ENCODE measurements at regions of chr2 and their contacts with region 1.

Region 1: DNA sequence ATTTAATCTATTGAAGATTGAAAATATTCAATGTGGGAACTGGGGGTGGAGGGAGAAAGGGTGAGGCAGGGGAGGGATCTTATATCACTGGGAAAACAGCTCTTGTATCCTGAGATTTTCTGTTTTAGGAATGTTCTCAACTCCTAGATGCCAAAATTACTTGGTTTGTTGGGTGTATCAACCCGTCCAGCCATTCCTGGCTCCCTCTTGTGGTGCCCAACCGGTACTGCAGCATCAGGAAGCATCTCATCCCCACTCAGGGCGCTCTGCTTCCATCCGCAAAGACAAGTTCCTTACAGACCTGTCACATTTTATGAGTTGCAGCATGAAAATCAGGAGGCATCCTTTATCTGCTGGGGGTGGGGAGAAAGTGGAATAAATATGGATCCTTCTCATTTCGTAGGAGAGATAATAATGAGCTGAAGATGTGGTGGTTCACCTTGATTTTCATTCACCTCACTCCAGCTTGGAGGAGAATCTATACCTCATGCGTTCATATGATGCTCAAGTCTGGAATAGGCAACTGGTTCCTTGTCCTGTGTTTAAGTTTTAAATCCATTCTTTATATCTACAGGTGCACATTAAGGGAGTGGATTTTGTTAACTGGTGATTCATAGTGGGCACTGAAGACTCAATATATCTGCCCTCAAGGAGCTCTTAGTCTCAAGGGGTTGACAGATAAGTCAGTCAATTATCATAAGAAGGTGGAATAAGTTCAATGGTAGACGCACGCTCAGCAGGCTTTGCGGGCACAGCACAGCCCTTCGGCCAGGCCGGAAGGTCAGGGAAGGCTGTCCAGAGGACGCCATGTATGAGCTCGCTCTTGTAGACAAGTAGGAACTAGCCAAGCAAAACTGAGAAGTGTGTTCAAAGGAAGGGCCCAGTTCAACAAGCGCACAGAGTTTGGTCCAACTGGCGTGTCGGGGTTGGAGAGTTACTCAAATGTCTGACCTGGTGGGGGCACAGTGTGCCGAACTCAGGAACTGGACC is 127.3 kb downstream of the RNF144A start:
- DNase-seq: peak; percentile 57 to 77
- ATAC-seq: peak; percentile 86 to 95
- H3K4me3 ChIP-seq: no peak overlapping the region
- H3K27ac ChIP-seq: no peak overlapping the region
- H3K4me1 ChIP-seq: no peaks in the 10 kb centered on the region
- CTCF ChIP-seq: peak; percentile 88
- EP300 ChIP-seq: no peak
- POLR2A ChIP-seq: no peak
- RAD21 ChIP-seq: peak; percentile 64 to 70

Region 2: GRCh38 chr2:6392966-6393365 is 651.6 kb before region 1 on chr2:
- CTCF ChIA-PET with region 1: no interaction called
- POLR2A ChIA-PET with region 1: no interaction called
- DNase-seq: no peak
- ATAC-seq: no peak
- H3K4me3 ChIP-seq: no peak overlapping the region
- H3K27ac ChIP-seq: no peak overlapping the region
- H3K4me1 ChIP-seq: no peaks in the 10 kb centered on the region
- CTCF ChIP-seq: no peak
- EP300 ChIP-seq: no peak
- POLR2A ChIP-seq: no peak
- RAD21 ChIP-seq: no peak

Region 3: GRCh38 chr2:6845312-6845711 is 199.2 kb before region 1 on chr2:
- CTCF ChIA-PET with region 1: interaction called, 15 read pairs
- POLR2A ChIA-PET with region 1: no interaction called
- DNase-seq: peak in 1 of 2 experiments; percentile 35
- ATAC-seq: no peak
- H3K4me3 ChIP-seq: no peak overlapping the region
- H3K27ac ChIP-seq: no peak overlapping the region
- H3K4me1 ChIP-seq: no peaks in the 10 kb centered on the region
- CTCF ChIP-seq: no peak
- EP300 ChIP-seq: no peak
- POLR2A ChIP-seq: no peak
- RAD21 ChIP-seq: no peak

Region 4: GRCh38 chr2:6896930-6897759 is 147.4 kb before region 1 on chr2:
- CTCF ChIA-PET with region 1: interaction called, 44 read pairs
- POLR2A ChIA-PET with region 1: no interaction called
- DNase-seq: peak in 1 of 2 experiments; percentile 55
- ATAC-seq: peak in 1 of 2 experiments; percentile 68; a peak in 4 of 6 replicates
- H3K4me3 ChIP-seq: no peak overlapping the region
- H3K27ac ChIP-seq: no peak overlapping the region
- H3K4me1 ChIP-seq: no peaks in the 10 kb centered on the region
- CTCF ChIP-seq: peak; percentile 73
- EP300 ChIP-seq: no peak
- POLR2A ChIP-seq: no peak
- RAD21 ChIP-seq: peak; percentile 77 to 78; a peak in 4 of 5 replicates

Region 5: GRCh38 chr2:6922201-6922685 is 122.3 kb before region 1 on chr2:
- CTCF ChIA-PET with region 1: interaction called, 17 read pairs
- POLR2A ChIA-PET with region 1: no interaction called
- DNase-seq: peak in 1 of 2 experiments; percentile 18
- ATAC-seq: no peak
- H3K4me3 ChIP-seq: no peak overlapping the region
- H3K27ac ChIP-seq: no peak overlapping the region
- H3K4me1 ChIP-seq: peaks cover 9% of the 10 kb centered on the region; the same call in 1 of the 3 replicates
- CTCF ChIP-seq: no peak
- EP300 ChIP-seq: no peak
- POLR2A ChIP-seq: no peak
- RAD21 ChIP-seq: no peak

Region 6: GRCh38 chr2:7031547-7032245 is 12.9 kb before region 1 on chr2:
- CTCF ChIA-PET with region 1: interaction called, 34 read pairs
- POLR2A ChIA-PET with region 1: no interaction called
- DNase-seq: peak in 1 of 2 experiments; percentile 66
- ATAC-seq: peak; percentile 10 to 55; a peak in 4 of 6 replicates
- H3K4me3 ChIP-seq: no peak overlapping the region
- H3K27ac ChIP-seq: no peak overlapping the region
- H3K4me1 ChIP-seq: 0 out of 3 replicates have a peak, but pooled peaks cover 4% of the 10 kb centered on the region
- CTCF ChIP-seq: no peak
- EP300 ChIP-seq: no peak
- POLR2A ChIP-seq: no peak
- RAD21 ChIP-seq: no peak

Region 7: DNA sequence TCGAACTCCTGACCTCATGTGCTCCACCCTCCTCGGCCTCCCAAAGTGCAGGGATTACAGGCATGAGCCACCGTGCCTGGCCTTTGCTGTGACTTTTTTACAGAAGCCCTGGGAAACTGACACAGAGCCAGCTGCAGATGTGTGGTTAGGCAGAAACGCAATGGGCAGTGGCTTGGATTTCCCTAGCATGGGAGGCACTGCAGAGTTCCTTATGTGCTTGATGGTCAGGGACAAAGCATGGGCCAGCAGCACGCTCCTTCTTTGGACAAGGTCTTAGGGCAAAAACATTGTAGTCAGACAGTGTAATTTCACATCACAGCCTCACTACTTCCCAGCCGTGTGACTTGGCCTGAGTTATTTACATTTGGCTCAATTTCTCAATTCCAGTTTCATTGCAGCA is 26.6 kb after region 1 on chr2:
- CTCF ChIA-PET with region 1: interaction called, 11 read pairs
- POLR2A ChIA-PET with region 1: no interaction called
- DNase-seq: no peak
- ATAC-seq: no peak
- H3K4me3 ChIP-seq: no peak overlapping the region
- H3K27ac ChIP-seq: no peak overlapping the region
- H3K4me1 ChIP-seq: no peaks in the 10 kb centered on the region
- CTCF ChIP-seq: no peak
- EP300 ChIP-seq: no peak
- POLR2A ChIP-seq: no peak
- RAD21 ChIP-seq: no peak

Region 8: DNA sequence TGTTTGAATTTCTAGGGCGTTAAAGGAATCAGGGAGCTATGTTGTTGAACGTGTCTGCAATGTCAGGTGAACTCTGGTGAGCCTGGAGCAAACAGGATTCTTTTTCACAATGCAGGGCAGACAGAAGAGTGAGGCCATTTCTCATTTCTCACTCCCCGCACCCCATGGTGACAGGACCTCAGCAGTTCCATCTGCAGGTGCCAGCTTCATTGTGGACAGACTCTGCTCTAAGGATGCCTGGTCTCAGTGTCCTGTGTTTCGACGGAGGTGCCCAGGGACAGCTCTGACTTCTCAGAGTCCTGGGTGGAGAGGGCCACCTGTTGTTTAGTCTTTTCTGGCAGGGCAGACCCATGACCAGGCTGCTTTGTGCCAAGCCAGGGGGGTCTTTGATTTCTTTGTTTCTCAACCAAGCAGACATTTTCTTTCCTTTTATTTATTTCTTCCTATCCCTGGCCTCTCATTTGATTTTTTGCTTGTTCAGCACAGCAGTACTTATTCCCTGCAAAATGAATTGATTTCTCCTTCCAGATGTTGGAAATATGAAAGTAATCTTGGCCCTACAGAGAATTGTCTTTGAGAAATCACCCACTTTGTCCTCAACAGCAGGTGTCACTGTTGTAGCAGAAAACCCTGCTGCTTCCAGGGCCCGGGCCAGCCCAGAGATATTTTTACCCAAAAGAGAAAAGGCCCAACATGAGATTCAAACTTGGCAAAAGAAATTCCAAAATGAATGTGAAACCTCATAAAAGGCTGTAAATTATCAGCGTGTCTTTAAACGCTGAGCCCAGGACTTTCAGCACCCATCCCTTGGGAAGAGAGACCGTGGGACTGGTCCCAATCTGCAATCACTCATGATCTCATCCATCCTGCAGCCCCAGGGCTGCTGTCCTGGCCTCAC is 74.3 kb after region 1 on chr2:
- CTCF ChIA-PET with region 1: no interaction called
- POLR2A ChIA-PET with region 1: no interaction called
- DNase-seq: peak; percentile 25 to 36
- ATAC-seq: peak; percentile 75 to 90; a peak in 5 of 6 replicates
- H3K4me3 ChIP-seq: no peak overlapping the region
- H3K27ac ChIP-seq: no peak overlapping the region
- H3K4me1 ChIP-seq: no peaks in the 10 kb centered on the region
- CTCF ChIP-seq: peak; percentile 74
- EP300 ChIP-seq: no peak
- POLR2A ChIP-seq: no peak
- RAD21 ChIP-seq: peak; percentile 85 to 87